Heart right ventricle (tissue), 16 donors: ENCODE measurements at regions of chr16 and their contacts with region 1.

Region 1: GRCh38 chr16:68113059-68113761 is 28.0 kb downstream of the NFATC3 start:
- DNase-seq: no peak
- ATAC-seq: no peak
- H3K4me3 ChIP-seq: no peak overlapping the region
- H3K27ac ChIP-seq: no peak overlapping the region
- H3K4me1 ChIP-seq: peaks cover 0 to 36% (median 13%) of the 10 kb centered on the region in 9 donors
- H3K27me3 ChIP-seq: no peaks in the 10 kb centered on the region
- CTCF ChIP-seq: no peak

Region 2: GRCh38 chr16:68166264-68166663 is 53.1 kb after region 1 on chr16:
- intact Hi-C with region 1: loop called in 1 of 10 experiments (anchors 2 kb)
- DNase-seq: no peak
- ATAC-seq: no peak
- H3K4me3 ChIP-seq: no peak overlapping the region
- H3K27ac ChIP-seq: no peak overlapping the region
- H3K4me1 ChIP-seq: peaks cover 0 to 3% (median 0%) of the 10 kb centered on the region in 9 donors
- H3K27me3 ChIP-seq: no peaks in the 10 kb centered on the region
- CTCF ChIP-seq: no peak